ENCODE measurements at regions of chr3 and their contacts with region 1.

Region 1: GRCh38 chr3:112979240-112979832 is 4.4 kb upstream of the CD200R1 start:
- DNase-seq: no peak
- ATAC-seq: peak; percentile 38
- H3K4me3 ChIP-seq: no peak overlapping the region
- H3K27ac ChIP-seq: no peak overlapping the region
- H3K4me1 ChIP-seq: no peaks in the 10 kb centered on the region
- H3K27me3 ChIP-seq: no peaks in the 10 kb centered on the region
- CTCF ChIP-seq: peak; percentile 27 to 74 (median 70)
- POLR2A ChIP-seq: no peak

Region 2: GRCh38 chr3:112642912-112643506 is 336.3 kb before region 1 on chr3:
- intact Hi-C with region 1: loop called (anchors 10 kb)
- DNase-seq: peak; percentile 78 to 86 (median 83)
- ATAC-seq: peak; percentile 71
- H3K4me3 ChIP-seq: no peak overlapping the region
- H3K27ac ChIP-seq: no peak overlapping the region
- H3K4me1 ChIP-seq: peaks cover 13% of the 10 kb centered on the region
- H3K27me3 ChIP-seq: no peaks in the 10 kb centered on the region
- CTCF ChIP-seq: peak; percentile 26 to 84 (median 65)
- POLR2A ChIP-seq: no peak

Region 3: DNA sequence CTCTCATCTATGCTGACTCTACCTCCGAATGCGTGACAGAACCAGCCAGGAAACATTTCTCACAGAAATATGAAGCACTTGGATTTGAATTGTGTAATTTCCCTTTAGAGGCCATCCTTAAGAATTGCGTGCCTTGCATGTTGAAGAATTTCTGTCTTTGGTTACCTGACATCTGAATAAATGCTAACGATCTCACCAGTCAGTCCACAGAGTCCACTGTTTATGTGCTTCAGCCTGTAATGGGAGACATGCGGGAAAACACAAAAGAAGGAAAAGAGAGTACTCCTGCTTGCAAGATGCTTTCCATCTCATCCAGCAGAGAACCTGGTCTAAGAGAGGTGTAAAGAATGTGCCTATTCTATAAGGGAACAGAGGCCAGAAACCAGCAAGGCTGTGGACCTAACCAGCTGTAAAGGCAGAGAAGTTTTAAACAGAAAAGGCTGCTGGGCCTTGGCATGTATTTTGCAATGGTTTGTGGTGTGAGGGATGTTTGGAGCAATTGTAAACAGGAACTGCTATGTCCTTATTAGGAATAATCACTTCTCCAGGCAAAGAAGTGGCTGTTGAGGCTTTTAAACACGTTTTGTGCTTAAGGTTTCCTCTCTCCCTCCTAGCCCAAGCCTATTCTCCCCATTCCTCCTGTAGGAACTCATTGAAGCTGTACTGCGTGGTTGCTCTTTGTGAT is 195.6 kb after region 1 on chr3:
- intact Hi-C with region 1: no loop called
- DNase-seq: no peak
- ATAC-seq: no peak
- H3K4me3 ChIP-seq: no peak overlapping the region
- H3K27ac ChIP-seq: no peak overlapping the region
- H3K4me1 ChIP-seq: no peaks in the 10 kb centered on the region
- H3K27me3 ChIP-seq: no peaks in the 10 kb centered on the region
- CTCF ChIP-seq: no peak
- POLR2A ChIP-seq: no peak

Measured in body of pancreas (tissue), 4 donors.